GM10248 (cell line): ENCODE measurements at regions of chr11 and their contacts with region 1.

Region 1: DNA sequence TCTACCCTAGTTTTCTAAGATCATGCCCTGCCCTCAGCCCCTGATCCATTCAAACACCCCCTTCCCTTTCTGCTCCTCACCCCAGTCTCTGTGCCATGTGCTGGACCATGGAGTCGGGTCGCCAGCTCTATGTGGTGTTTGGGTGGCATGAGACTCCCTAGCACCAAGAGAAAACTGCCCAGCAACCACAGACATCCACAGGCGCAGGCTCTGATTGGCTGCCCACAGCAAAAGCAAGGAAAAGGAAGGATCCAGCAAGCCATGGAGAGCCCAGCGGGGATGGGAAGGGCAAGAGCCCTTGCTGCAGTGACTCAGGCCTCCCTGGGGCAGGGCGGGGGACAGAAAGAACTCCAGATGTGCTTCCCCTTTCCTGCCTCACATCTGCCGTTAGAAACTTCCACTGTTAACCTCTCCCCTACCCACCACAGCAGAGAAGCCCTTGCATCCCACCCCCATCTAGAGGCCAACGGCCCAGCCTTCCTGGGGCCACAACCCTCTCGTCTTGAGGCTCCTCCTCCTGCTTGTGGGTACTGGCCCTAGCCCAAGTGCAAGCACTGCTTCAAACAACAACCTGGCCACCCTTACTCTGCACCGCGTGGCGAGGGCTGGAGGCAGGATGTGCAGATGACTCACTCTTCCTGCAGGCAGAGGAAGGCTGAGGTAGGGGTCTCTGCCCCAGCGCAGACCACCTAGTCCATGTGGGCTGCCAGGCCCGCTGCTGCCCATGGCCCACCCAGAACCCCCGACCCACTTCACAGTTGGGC is 9.7 kb upstream of the AHNAK start:
- DNase-seq: peak; percentile 70
- CTCF ChIP-seq: no peak

Region 2: DNA sequence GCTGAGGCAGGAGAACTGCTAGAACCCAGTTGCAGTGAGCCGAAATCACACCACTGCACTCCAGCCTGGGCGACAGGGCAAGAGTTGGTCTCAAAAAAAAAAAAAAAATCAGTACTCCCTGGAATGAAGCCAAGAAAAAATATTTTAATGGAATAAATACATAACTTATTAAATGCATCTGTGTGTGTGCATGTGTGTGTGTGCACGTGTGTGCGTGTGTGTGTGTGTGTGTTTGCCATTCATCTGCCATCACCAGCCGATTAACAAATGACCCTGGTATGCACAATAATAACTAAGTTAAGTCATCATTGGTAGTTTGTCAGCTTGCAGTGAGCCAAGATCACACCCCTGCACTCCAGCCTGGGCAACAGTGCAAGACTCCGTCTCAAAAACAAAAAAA is 172.5 kb before region 1 on chr11:
- CTCF ChIA-PET with region 1: no interaction called
- POLR2A ChIA-PET with region 1: no interaction called
- DNase-seq: no peak
- CTCF ChIP-seq: no peak

Region 3: DNA sequence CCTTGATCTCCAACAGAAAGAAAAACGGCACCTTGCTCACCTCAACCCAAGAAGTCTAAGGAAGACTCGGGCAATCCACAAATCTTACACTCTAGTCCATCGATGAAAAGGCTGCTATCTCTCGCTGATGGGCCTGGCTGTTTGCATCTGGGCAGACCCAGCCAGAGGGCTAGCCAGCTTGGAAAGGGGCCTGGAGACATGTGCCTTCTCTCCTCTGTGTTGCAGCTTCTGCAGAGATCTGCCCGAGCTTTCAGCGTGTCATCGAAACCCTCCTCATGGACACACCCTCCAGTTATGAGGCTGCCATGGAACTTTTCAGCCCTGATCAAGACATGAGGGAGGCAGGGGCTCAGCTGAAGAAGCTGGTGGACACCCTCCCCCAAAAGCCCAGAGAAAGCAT is 134.3 kb before region 1 on chr11:
- CTCF ChIA-PET with region 1: interaction called, 65 read pairs
- POLR2A ChIA-PET with region 1: no interaction called
- DNase-seq: no peak
- CTCF ChIP-seq: no peak

Region 4: DNA sequence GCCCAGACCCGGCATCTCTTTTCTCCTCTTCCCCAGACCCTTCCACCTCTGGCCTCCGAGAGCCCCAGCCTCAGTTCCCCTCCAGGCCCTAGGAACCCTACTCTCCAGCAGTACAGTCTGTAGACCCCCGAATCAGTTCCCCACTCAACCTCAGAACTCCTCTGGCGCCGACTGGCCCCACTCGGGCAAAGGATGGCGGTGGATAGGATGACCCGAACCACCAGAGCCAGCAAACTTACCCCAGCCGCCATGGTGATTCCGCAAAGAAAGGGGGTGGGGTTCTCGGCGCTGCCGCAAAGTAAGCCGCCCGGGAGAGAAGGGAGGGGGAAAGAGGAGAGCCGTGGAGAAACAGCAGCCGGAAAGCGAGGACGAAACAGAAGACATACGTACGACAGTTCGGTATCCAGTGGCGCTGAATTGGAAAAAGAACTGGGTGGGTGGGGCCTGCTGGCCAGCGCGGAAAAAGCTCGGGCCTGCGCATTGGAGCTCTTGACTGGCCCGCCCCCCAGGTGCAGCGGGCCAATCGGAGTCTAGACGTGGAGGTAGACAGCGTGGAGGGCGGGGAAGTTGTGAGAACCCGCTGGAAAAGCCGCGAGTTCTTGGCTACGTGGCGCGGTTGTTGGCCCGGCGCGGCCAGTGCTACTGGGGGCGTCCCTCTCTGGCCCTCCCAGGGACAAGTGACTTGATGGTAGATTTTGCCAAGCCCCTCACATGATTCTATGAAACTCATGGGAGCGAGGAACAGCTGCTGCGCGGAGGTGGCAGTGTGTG is 17.5 kb after region 1 on chr11 and contains the start of gene EEF1G:
- CTCF ChIA-PET with region 1: interaction called, 52 read pairs
- POLR2A ChIA-PET with region 1: interaction called, 12 read pairs
- DNase-seq: peak; percentile 99
- CTCF ChIP-seq: no peak